ENCODE measurements at regions of chr13 and their contacts with region 1.

Region 1: DNA sequence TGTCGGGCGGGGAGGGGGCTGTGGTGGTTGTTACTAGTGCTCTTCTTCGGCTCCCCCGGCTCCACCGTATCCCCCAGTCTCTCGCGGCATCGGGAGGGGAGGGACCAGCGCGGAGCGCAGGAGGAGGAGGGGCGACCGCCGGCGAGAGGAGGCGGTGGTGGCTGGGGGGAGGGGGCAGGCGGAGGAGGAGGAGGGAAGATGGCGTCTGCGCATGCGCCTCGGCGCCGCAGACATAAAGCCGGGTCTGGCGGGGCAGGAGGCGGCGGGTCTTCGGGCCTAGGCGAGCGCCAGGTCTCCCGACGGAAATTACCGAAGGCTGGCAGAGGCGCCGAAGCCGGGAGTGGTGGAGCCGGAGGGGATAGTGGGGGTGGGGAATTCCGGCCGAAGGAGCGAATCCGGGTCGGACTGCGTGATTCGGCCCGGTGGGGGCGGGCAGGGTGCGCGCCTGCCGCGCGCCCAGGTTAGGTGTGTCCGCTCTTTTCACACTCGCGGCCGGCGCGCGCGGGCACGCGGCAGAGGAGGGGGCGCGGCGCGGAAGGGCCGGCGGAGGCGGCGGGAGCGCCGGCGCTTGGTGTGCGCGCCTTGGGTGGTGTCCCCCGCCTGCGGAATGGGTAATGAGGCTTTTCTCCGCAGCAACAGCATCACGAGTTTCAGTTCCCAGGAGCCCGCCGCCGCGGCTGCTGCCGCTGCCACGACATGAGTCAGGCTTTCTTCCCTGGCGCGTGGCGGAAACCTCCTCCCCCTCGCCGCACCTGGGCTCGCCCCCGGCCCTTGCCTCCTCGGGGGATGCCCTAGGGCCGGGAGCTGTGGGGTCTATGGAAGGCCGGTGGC is 1.3 kb upstream of the TSC22D1 start:
- DNase-seq: peak; percentile 96
- H3K4me3 Mint-ChIP-seq: peak overlapping the region; percentile 93
- H3K27ac Mint-ChIP-seq: peak overlapping the region; percentile 85
- H3K4me1 Mint-ChIP-seq: peaks cover 39% of the 10 kb centered on the region
- H3K27me3 Mint-ChIP-seq: peaks cover 2% of the 10 kb centered on the region

Region 2: DNA sequence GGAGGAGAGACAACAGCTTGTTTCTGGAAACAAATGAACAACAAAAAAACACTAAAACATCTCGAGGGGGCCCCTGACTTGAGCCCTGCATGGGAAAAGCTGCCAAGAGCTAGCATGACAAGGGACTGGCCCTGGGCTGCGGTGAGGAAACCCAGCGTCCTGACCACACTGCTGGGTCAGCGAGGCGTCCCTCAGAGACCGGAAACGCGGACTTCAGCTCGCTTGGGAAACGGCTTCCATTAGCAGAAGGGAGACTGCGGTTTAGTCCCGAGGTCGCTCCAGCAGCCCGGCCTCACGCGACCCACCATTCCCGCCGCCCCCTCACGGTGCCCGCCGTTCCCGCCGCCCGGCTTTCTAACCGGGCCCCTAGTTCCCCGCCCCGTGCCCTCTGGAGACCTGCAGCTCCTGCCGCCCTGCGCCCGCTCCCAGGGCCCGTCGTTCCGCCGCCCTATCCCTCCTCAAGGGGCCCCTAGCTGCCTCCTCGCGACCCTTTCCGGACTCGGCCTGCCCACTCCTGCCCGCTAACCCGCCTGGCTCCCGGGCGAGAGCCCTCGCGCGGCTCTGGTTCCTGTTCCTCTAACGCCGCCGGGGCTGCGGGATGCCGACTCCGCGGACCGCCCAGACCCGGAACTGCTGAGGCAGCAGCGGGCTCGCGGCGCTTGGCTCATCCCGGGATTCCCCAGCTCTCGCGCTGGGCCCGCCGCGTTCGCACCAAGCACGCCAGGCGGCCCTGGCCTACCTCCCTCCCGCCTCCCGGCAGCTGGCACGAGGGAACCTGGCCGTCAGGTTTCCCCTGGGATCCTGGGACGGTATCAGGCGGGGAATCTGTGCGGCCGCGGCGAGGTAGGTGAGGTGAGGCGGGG is 698.3 kb before region 1 on chr13 and contains the start of gene CCDC122:
- CTCF ChIA-PET with region 1: no interaction called
- POLR2A ChIA-PET with region 1: no interaction called
- intact Hi-C with region 1: loop called (anchors 5 kb)
- DNase-seq: peak; percentile 87
- H3K4me3 Mint-ChIP-seq: peak within 1 kb of the TSS; percentile 85
- H3K27ac Mint-ChIP-seq: peak within 1 kb of the TSS; percentile 87
- H3K4me1 Mint-ChIP-seq: peaks cover 23% of the 10 kb centered on the region
- H3K27me3 Mint-ChIP-seq: peaks cover 2% of the 10 kb centered on the region
- total RNA-seq, gene CCDC122: 2.0 to 2.5 TPM

Region 3: GRCh38 chr13:44259045-44260027 is 318.1 kb before region 1 on chr13:
- CTCF ChIA-PET with region 1: no interaction called
- POLR2A ChIA-PET with region 1: no interaction called
- intact Hi-C with region 1: loop called (anchors 1 kb)
- DNase-seq: peak; percentile 88
- H3K4me3 Mint-ChIP-seq: peak overlapping the region; percentile 45
- H3K27ac Mint-ChIP-seq: peak overlapping the region; percentile 72
- H3K4me1 Mint-ChIP-seq: peaks cover 20% of the 10 kb centered on the region
- H3K27me3 Mint-ChIP-seq: peaks cover 9% of the 10 kb centered on the region

Region 4: DNA sequence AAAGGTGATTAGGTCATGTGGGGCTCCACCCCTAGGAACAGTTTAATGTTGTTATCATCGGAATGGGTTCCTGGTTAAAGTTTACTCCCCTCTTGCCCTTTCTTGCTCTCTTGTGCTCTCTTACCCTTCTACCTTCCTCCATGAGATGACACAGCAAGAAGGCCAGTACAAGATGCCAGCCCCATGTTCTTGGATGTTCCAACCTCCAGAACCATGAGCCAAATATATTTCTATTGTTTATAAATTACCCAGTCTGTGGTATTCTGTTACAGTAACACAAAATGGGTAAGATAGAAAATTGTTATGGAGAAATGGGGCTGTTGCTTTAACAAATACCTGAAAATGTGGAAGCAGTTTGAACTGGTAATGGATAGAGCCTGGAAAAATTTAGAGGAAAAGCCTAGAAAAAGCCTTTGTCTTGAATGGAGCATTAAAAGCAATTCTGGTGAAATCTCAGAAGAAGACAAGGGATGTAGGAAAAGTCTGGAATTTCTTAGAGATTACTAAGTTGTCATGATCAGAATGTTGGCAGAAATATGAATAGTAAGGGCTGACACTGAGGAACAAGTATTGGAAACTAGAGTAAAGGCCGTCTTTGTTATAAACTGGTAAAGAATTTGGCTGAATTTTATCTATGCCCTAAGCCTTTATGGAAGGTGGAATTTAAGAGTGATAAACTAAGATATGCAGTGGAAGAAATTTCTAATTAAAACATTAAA is 52.2 kb after region 1 on chr13:
- CTCF ChIA-PET with region 1: no interaction called
- POLR2A ChIA-PET with region 1: no interaction called
- intact Hi-C with region 1: no loop called
- DNase-seq: no peak
- H3K4me3 Mint-ChIP-seq: no peak overlapping the region
- H3K27ac Mint-ChIP-seq: no peak overlapping the region
- H3K4me1 Mint-ChIP-seq: no peaks in the 10 kb centered on the region
- H3K27me3 Mint-ChIP-seq: peaks cover 15% of the 10 kb centered on the region

Region 5: GRCh38 chr13:44648392-44649103 is 71.1 kb after region 1 on chr13:
- CTCF ChIA-PET with region 1: no interaction called
- POLR2A ChIA-PET with region 1: interaction called, 3 read pairs
- intact Hi-C with region 1: loop called (anchors 1 kb)
- DNase-seq: peak; percentile 22
- H3K4me3 Mint-ChIP-seq: no peak overlapping the region
- H3K27ac Mint-ChIP-seq: no peak overlapping the region
- H3K4me1 Mint-ChIP-seq: peaks cover 16% of the 10 kb centered on the region
- H3K27me3 Mint-ChIP-seq: peaks cover 23% of the 10 kb centered on the region

Region 6: GRCh38 chr13:44692173-44692713 is 114.8 kb after region 1 on chr13:
- CTCF ChIA-PET with region 1: no interaction called
- POLR2A ChIA-PET with region 1: no interaction called
- intact Hi-C with region 1: no loop called
- DNase-seq: no peak
- H3K4me3 Mint-ChIP-seq: no peak overlapping the region
- H3K27ac Mint-ChIP-seq: no peak overlapping the region
- H3K4me1 Mint-ChIP-seq: no peaks in the 10 kb centered on the region
- H3K27me3 Mint-ChIP-seq: peaks cover 18% of the 10 kb centered on the region

Region 7: GRCh38 chr13:44815623-44816022 is 238.2 kb after region 1 on chr13:
- CTCF ChIA-PET with region 1: no interaction called
- POLR2A ChIA-PET with region 1: no interaction called
- intact Hi-C with region 1: loop called (anchors 5 kb)
- DNase-seq: peak; percentile 62
- H3K4me3 Mint-ChIP-seq: no peak overlapping the region
- H3K27ac Mint-ChIP-seq: no peak overlapping the region
- H3K4me1 Mint-ChIP-seq: peaks cover 22% of the 10 kb centered on the region
- H3K27me3 Mint-ChIP-seq: peaks cover 25% of the 10 kb centered on the region

Region 8: DNA sequence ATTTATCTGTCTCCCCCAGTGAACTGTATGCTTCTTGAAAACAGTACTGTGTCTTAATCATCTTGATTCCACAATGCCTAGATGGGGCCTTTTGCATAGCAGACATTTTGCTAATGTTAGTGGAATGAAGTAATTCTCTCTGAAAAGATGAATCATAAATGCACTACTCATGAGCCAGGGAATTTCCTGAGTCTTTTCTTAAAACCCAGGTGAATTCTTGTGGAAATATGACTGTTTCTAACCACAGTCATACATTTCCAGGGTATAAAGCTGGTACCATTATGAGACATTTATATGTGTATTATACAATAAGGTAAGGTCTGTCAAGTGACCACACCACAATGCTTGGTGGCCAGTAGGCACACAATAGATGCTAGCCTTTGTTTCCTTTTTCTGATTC is 628.9 kb after region 1 on chr13:
- CTCF ChIA-PET with region 1: no interaction called
- POLR2A ChIA-PET with region 1: no interaction called
- intact Hi-C with region 1: loop called (anchors 1 kb)
- DNase-seq: peak; percentile 34
- H3K4me3 Mint-ChIP-seq: no peak overlapping the region
- H3K27ac Mint-ChIP-seq: no peak overlapping the region
- H3K4me1 Mint-ChIP-seq: peaks cover 23% of the 10 kb centered on the region
- H3K27me3 Mint-ChIP-seq: no peaks in the 10 kb centered on the region